Activated T-helper 2 cell treated with anti-CD3 and anti-CD28 coated beads, Interferon-gamma antibody, Interleukin-2, Interleukin-4, amounts not matched to agents 10 μg/mL and 5 μg/mL and 100 μg/mL, durations not matched to agents 14 hours and 24 hours and 36 hours (primary cell): ENCODE measurements at regions of chr7 and their contacts with region 1.

Region 1: DNA sequence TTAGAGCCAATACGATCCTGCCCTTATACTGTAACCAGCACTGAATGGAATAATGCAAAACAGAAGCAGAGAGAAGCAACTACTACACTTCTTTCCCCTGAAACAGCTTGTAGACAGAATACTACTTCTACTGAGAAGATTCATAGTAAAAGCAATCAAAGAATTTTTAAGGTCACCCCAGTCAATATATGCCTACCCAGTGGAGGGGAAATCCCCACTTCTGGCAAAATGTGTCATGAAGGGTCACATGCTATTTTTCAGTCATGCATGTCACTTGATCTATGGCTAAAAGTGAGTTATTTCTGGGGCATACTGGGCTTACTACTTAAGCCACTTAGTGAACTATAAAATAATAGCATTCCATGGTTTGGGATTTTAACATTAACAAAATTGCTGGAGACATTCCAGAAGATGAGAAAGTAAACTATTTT is 25.6 kb downstream of the IRF5 start:
- DNase-seq: no peak
- H3K4me3 Mint-ChIP-seq: peak overlapping the region; percentile 30
- H3K27ac Mint-ChIP-seq: peak overlapping the region; percentile 78
- H3K4me1 Mint-ChIP-seq: peaks cover 31% of the 10 kb centered on the region
- H3K27me3 Mint-ChIP-seq: no peaks in the 10 kb centered on the region

Region 2: GRCh38 chr7:128890306-128891109 is 72.8 kb before region 1 on chr7:
- intact Hi-C with region 1: no loop called
- DNase-seq: no peak
- H3K4me3 Mint-ChIP-seq: no peak overlapping the region
- H3K27ac Mint-ChIP-seq: no peak overlapping the region
- H3K4me1 Mint-ChIP-seq: no peaks in the 10 kb centered on the region
- H3K27me3 Mint-ChIP-seq: peaks cover 13% of the 10 kb centered on the region

Region 3: DNA sequence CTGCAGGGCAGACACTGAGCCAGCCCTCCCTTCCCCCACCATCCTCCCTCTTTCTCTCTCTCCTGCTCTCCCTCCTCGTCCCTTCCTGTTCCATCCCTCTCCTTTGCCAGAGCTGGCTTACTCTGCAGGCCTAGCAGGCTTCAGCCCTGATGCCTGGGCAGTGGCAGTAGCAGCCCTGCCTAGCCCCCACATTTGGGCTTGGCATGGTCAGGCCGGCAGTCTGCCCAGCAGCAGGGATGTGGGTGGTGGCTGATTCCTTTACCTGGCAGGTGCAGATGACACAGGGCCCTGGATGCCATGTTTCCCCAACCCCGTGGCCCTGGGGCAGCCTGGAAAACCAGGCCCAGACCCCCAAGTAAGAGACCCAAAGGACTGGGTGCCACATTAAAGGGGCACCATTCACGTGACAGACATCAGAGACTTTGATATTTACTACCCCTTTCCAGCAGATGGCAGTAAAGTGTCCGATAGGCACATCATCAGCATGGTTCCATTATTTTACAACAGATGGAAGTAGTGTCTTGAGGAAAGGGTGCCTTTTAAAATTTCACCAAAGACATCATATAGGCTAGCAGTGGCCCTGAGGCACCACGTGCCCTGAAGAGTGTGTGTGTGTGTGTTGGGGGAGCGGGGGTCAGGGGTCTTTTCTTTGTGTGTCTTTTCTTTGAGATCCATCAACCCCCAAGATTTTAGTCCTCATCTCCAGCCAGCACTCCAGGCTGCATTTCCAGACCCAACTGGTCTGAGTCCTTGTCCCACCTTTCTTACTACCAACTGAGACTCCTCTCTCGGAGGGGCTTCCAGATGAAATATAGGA is 58.8 kb before region 1 on chr7:
- intact Hi-C with region 1: loop called (anchors 1 kb)
- DNase-seq: no peak
- H3K4me3 Mint-ChIP-seq: no peak overlapping the region
- H3K27ac Mint-ChIP-seq: no peak overlapping the region
- H3K4me1 Mint-ChIP-seq: no peaks in the 10 kb centered on the region
- H3K27me3 Mint-ChIP-seq: peaks cover 24% of the 10 kb centered on the region

Region 4: DNA sequence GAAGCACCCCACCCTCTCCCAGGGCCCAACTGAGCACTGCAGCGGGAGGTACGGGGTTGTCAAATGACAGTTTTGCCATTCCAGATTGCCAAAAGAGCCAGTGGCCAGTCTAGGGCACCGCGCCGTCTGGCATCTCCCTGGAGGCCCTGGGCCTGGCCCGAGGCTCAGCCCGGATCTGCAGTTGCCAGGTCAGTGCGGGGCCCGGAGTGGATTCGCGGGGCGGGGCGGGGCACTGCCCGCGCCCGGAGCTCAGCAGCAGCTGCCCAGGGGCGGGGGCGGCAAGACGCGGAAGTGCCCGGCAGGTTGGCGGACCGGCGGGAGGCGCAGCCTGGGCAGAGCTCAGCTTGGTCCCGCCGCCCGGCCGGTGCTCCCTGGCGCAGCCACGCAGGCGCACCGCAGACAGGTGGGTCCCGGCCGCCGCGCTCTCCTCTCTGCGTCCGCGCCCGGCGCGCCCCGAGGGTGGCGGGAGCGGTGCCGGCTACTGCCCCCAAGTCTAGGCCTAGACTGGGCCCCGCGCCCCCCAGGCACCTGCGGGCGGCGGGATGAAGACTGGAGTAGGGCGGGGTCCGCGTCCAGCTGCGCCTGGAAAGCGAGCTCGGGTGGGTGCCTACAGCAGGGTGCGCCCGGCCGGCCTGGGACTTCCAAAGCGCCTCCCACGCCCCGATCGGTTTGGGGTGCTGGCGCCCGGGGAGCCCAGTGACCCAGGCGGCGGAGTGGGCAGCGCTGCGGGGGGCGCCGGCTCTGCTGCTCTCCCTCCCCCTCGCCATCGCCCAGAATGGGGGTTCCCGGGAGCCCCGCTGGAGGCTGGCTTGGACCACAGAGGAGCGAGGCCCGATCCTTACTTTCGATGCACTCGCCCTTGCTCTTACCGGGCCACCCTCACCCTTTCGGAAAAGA is 25.4 kb before region 1 on chr7 and contains the start of gene IRF5:
- intact Hi-C with region 1: loop called (anchors 2 kb)
- DNase-seq: no peak
- H3K4me3 Mint-ChIP-seq: peak within 1 kb of the TSS; percentile 90
- H3K27ac Mint-ChIP-seq: peak within 1 kb of the TSS; percentile 82
- H3K4me1 Mint-ChIP-seq: peaks cover 41% of the 10 kb centered on the region
- H3K27me3 Mint-ChIP-seq: peaks cover 21% of the 10 kb centered on the region
- total RNA-seq, gene IRF5: 25.0 and 26.0 TPM in 2 replicates

Region 5: GRCh38 chr7:129009437-129009836 is 46.1 kb after region 1 on chr7:
- intact Hi-C with region 1: loop called (anchors 1 kb)
- DNase-seq: no peak
- H3K4me3 Mint-ChIP-seq: no peak overlapping the region
- H3K27ac Mint-ChIP-seq: peak overlapping the region; percentile 87
- H3K4me1 Mint-ChIP-seq: peaks cover 30% of the 10 kb centered on the region
- H3K27me3 Mint-ChIP-seq: no peaks in the 10 kb centered on the region

Region 6: GRCh38 chr7:129054438-129055293 is 91.3 kb after region 1 on chr7 and contains the start of gene TNPO3:
- intact Hi-C with region 1: loop called (anchors 1 kb)
- DNase-seq: peak; percentile 87
- H3K4me3 Mint-ChIP-seq: peak within 1 kb of the TSS; percentile 99
- H3K27ac Mint-ChIP-seq: peak within 1 kb of the TSS; percentile 100
- H3K4me1 Mint-ChIP-seq: peaks cover 20% of the 10 kb centered on the region
- H3K27me3 Mint-ChIP-seq: peaks cover 9% of the 10 kb centered on the region
- total RNA-seq, gene TNPO3: 53.3 and 53.7 TPM in 2 replicates

Region 7: DNA sequence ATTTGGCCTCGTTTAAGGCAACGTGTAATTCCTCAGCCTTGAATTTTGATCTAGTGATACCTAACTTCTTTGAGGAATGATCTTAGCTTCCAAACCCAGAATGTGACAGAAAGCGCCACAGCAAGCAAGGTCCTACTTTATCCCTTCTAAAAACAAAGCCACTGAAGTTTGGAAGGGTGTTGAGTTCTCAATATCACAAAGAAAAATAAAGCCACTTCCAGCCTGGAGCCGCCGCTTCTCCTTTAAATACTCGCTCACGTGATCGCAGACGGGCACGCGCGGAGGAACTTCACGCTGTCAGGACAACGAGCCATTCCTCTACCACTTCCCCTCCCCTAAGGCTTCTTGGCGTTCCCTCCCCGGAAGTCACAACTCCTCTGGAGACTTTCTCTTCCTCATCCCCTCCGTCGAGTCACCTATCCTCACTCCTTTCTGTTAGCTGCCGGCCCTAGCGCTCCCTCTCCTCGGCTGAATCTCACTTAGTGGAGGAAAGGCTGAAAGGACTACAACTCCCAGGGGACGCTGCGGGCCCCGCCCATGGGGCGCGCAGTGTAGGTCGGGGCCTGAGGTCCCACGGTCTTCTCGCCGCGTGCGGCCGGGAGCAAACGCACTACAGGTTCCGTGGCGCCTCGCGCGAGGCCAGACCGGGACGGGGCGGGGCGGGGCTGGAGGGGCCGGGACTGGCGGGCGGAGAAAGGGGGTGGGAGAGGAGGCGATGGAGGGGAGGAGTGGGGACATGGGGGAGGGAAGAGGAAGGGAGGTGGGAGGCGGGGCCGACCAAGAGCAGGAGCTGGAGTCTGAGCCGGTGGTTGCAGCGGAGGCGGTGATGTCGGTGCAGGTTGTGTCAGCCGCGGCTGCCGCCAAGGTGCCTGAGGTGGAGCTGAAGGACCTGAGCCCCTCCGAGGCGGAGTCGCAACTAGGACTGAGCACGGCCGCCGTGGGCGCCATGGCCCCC is 261.2 kb after region 1 on chr7 and contains the start of gene AHCYL2:
- intact Hi-C with region 1: loop called (anchors 1 kb)
- DNase-seq: peak; percentile 94
- H3K4me3 Mint-ChIP-seq: peak within 1 kb of the TSS; percentile 94
- H3K27ac Mint-ChIP-seq: peak within 1 kb of the TSS; percentile 96
- H3K4me1 Mint-ChIP-seq: peaks cover 22% of the 10 kb centered on the region
- H3K27me3 Mint-ChIP-seq: no peaks in the 10 kb centered on the region
- total RNA-seq, gene AHCYL2: 14.7 and 15.1 TPM in 2 replicates